GM12878 (cell line): ENCODE measurements at regions of chr9 and their contacts with region 1.

Region 1: GRCh38 chr9:78439190-78439865 is 142.4 kb downstream of the PSAT1 start:
- DNase-seq: peak; percentile 7
- ATAC-seq: peak; percentile 91
- H3K4me3 ChIP-seq: no peak overlapping the region
- H3K27ac ChIP-seq: no peak overlapping the region
- H3K4me1 ChIP-seq: no peaks in the 10 kb centered on the region
- H3K27me3 ChIP-seq: peaks cover 0 to 4% of the 10 kb centered on the region in 2 experiments; a peak in 3 of 4 replicates
- CTCF ChIP-seq: peak; percentile 90 to 97 (median 94); a peak in 5 of 6 replicates
- EP300 ChIP-seq: no peak
- POLR2A ChIP-seq: no peak
- RAD21 ChIP-seq: peak; percentile 83

Region 2: GRCh38 chr9:78428640-78429039 is 10.7 kb before region 1 on chr9:
- CTCF ChIA-PET with region 1: interaction called, 15 read pairs
- POLR2A ChIA-PET with region 1: no interaction called
- RAD21 ChIA-PET with region 1: no interaction called
- SMC1A ChIA-PET with region 1: no interaction called
- in situ Hi-C with region 1: no loop called
- intact Hi-C with region 1: no loop called
- DNase-seq: no peak
- ATAC-seq: no peak
- H3K4me3 ChIP-seq: no peak overlapping the region
- H3K27ac ChIP-seq: no peak overlapping the region
- H3K4me1 ChIP-seq: no peaks in the 10 kb centered on the region
- H3K27me3 ChIP-seq: no peaks in the 10 kb centered on the region
- CTCF ChIP-seq: no peak
- EP300 ChIP-seq: no peak
- POLR2A ChIP-seq: no peak
- RAD21 ChIP-seq: no peak

Region 3: DNA sequence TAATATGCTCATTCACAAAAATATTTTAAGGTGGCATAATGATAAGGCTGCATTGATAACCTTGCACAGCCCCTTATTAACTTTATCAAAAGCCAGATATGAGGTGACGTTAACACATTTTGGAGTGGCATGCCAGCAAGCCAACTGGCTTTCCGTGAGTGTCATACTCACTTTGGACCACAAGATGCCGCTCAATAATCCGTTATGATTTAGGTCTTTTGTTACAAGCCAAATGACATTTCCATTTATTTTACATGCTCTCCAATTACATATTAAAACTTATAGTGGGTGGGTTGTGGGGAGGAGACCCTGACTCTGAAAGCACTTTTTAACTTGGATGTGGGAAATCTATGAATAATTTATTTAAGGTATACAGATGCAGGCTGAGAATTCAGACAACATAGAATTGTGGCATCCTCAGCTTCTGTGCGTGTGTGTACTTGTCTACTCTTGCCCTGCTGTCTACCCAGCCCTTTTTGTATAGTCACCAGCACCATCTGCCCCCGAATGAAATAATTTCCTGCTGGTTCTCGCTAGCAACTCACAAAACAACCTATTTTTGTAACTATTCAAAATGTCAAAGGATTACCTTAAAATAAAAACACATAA is 162.7 kb after region 1 on chr9:
- CTCF ChIA-PET with region 1: no interaction called
- POLR2A ChIA-PET with region 1: no interaction called
- RAD21 ChIA-PET with region 1: no interaction called
- SMC1A ChIA-PET with region 1: interaction called, 3 read pairs
- in situ Hi-C with region 1: no loop called
- intact Hi-C with region 1: loop called (anchors 10 kb)
- DNase-seq: no peak
- ATAC-seq: peak; percentile 57
- H3K4me3 ChIP-seq: no peak overlapping the region
- H3K27ac ChIP-seq: no peak overlapping the region
- H3K4me1 ChIP-seq: no peaks in the 10 kb centered on the region
- H3K27me3 ChIP-seq: no peaks in the 10 kb centered on the region
- CTCF ChIP-seq: peak; percentile 71 to 78 (median 75)
- EP300 ChIP-seq: no peak
- POLR2A ChIP-seq: no peak
- RAD21 ChIP-seq: peak; percentile 78

Region 4: DNA sequence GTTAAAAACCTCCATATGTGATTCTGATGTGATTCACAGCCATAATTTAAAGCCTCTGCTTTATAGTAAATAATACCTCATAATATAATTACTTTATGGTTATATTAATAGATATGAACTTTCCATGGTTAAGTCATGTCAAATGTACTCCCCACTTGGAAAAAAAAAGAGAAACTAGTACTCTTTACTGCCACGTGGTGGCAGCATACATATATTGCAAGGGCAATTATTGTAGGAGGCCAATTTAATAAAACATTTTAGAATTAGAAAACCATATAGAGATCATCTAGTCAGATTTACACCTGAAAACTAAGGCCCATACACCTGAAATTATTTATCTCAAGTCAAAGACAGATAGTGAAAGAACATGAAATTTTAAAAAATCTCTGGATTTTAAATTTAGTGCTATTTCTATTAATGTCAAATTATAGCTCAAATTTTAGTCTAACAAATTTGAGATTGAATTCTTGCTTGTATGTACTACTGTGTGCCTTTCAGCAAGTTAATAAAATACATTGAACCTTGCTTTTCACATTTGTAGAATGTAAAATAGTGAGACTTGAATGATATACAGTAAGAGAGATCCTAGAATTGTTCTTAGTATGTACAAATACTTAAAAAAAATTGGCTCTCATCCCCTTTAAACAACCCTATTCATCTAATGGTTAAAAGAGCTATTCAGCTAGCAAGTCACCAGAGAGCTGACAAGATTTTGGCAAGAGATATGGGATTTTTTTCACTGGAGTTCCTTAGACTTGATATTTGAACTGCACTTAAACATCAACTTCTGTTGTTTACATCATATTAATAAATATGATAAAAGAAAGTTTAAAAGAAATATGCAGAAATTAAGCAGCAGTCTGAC is 1736.2 kb after region 1 on chr9:
- CTCF ChIA-PET with region 1: no interaction called
- POLR2A ChIA-PET with region 1: no interaction called
- RAD21 ChIA-PET with region 1: no interaction called
- SMC1A ChIA-PET with region 1: no interaction called
- in situ Hi-C with region 1: no loop called
- intact Hi-C with region 1: loop called (anchors 10 kb)
- DNase-seq: no peak
- ATAC-seq: 0 out of 3 replicates have a peak, but pooled peaks have one; percentile 33
- H3K4me3 ChIP-seq: no peak overlapping the region
- H3K27ac ChIP-seq: no peak overlapping the region
- H3K4me1 ChIP-seq: no peaks in the 10 kb centered on the region
- H3K27me3 ChIP-seq: no peaks in the 10 kb centered on the region
- CTCF ChIP-seq: peak; percentile 50 to 59 (median 56); a peak in 5 of 6 replicates
- EP300 ChIP-seq: no peak
- POLR2A ChIP-seq: no peak
- RAD21 ChIP-seq: peak; percentile 68